ENCODE measurements at regions of chr9 and their contacts with region 1.

Region 1: DNA sequence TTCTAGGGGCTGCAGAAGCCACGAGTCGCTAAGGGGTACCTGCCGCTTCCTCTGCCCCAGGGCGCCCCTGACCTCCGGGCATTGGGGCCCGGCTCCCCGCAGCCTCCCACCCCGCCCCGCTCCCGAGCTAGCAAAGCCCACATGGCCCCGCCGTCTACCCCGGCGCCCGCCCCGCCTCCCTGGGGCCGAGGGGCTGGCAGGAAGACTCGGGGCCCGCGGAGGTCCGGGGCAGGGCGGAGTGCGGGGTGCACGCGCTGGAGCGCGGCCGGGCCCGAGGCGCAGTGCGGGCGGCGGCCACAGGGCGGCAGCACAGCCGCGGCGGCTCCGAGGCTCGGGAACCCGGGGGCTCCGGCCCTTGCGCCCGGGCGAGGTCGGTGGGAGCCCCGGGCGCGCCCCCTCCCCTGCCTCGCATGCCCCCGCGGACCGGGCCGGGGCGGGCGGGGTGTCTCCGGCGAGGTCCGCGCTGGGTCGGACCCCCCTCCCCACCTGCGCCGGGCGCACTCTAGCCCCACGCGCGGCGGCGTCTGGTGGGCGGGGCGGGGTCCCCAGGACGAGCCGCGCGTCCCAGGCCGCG is 6.7 kb downstream of the NRARP start:
- DNase-seq: peak; percentile 80
- ATAC-seq: peak; percentile 85
- H3K4me3 ChIP-seq: peak overlapping the region in 4 of 5 experiments; percentile 21 to 55 (median 40)
- H3K4me3 Mint-ChIP-seq: peak overlapping the region; percentile 73
- H3K27ac ChIP-seq: no peak overlapping the region
- H3K27ac Mint-ChIP-seq: no peak overlapping the region
- H3K4me1 ChIP-seq: peaks cover 29% of the 10 kb centered on the region in 2 donors
- H3K4me1 Mint-ChIP-seq: peaks cover 18% of the 10 kb centered on the region
- H3K27me3 ChIP-seq: peaks cover 0 to 59% (median 35%) of the 10 kb centered on the region in 4 experiments
- H3K27me3 Mint-ChIP-seq: peaks cover 32% of the 10 kb centered on the region
- CTCF ChIP-seq: peak; percentile 59

Region 2: GRCh38 chr9:137445275-137445807 is 150.0 kb after region 1 on chr9:
- CTCF ChIA-PET with region 1: interaction called, 3 read pairs
- POLR2A ChIA-PET with region 1: no interaction called
- intact Hi-C with region 1: loop called (anchors 1 kb)
- DNase-seq: peak; percentile 88
- ATAC-seq: peak; percentile 89
- H3K4me3 ChIP-seq: no peak overlapping the region
- H3K4me3 Mint-ChIP-seq: no peak overlapping the region
- H3K27ac ChIP-seq: no peak overlapping the region
- H3K27ac Mint-ChIP-seq: no peak overlapping the region
- H3K4me1 ChIP-seq: peaks cover 7 to 23% of the 10 kb centered on the region in 2 donors
- H3K4me1 Mint-ChIP-seq: peaks cover 8% of the 10 kb centered on the region
- H3K27me3 ChIP-seq: peaks cover 0 to 20% (median 7%) of the 10 kb centered on the region in 4 experiments
- H3K27me3 Mint-ChIP-seq: peaks cover 11% of the 10 kb centered on the region
- CTCF ChIP-seq: peak; percentile 83

Region 3: GRCh38 chr9:137534256-137535117 is 239.2 kb after region 1 on chr9:
- CTCF ChIA-PET with region 1: no interaction called
- POLR2A ChIA-PET with region 1: no interaction called
- intact Hi-C with region 1: loop called (anchors 10 kb)
- DNase-seq: peak; percentile 52
- ATAC-seq: peak; percentile 57
- H3K4me3 ChIP-seq: no peak overlapping the region
- H3K4me3 Mint-ChIP-seq: peak overlapping the region; percentile 17
- H3K27ac ChIP-seq: no peak overlapping the region
- H3K27ac Mint-ChIP-seq: peak overlapping the region; percentile 57
- H3K4me1 ChIP-seq: peaks cover 19 to 28% of the 10 kb centered on the region in 2 donors
- H3K4me1 Mint-ChIP-seq: peaks cover 35% of the 10 kb centered on the region
- H3K27me3 ChIP-seq: no peaks in the 10 kb centered on the region
- H3K27me3 Mint-ChIP-seq: no peaks in the 10 kb centered on the region
- CTCF ChIP-seq: peak; percentile 69

Measured in B cell (primary cell).